Caco-2 (cell line): ENCODE measurements at regions of chr7 and their contacts with region 1.

Region 1: GRCh38 chr7:123242467-123243092 is 42.8 kb upstream of the SLC13A1 start:
- DNase-seq: peak; percentile 35 to 42
- H3K4me3 ChIP-seq: no peak overlapping the region
- H3K4me3 Mint-ChIP-seq: no peak overlapping the region
- H3K27ac Mint-ChIP-seq: no peak overlapping the region
- H3K4me1 ChIP-seq: no peaks in the 10 kb centered on the region
- H3K4me1 Mint-ChIP-seq: no peaks in the 10 kb centered on the region
- H3K27me3 ChIP-seq: no peaks in the 10 kb centered on the region
- H3K27me3 Mint-ChIP-seq: no peaks in the 10 kb centered on the region
- CTCF ChIP-seq: no peak

Region 2: DNA sequence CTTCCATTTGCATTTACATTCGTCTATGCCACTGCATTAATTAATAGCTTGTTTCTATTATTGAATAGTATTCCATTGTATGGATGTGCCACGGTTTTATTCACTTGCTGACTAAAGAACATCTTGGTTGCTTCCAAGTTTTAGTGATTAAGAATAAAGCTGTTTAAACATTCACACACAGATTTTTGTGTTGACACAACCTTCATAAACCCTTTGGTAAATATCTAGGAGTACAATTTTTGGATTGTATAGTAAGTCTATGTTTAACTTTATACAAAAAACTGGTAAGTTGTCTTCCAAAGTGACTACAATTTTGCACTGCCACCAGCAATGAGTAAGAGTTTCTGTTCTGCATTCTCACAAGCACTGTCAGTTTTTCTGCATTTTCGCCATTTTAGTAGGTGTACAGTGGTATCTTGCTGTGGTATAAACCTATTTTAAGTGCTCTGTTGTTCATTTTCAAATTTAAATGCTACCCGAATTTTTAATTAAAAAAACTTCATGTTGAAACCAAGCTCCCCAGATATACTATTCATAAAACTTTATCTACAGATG is 665.1 kb before region 1 on chr7:
- CTCF ChIA-PET with region 1: no interaction called
- POLR2A ChIA-PET with region 1: no interaction called
- intact Hi-C with region 1: no loop called
- DNase-seq: no peak
- H3K4me3 ChIP-seq: no peak overlapping the region
- H3K4me3 Mint-ChIP-seq: no peak overlapping the region
- H3K27ac Mint-ChIP-seq: no peak overlapping the region
- H3K4me1 ChIP-seq: no peaks in the 10 kb centered on the region
- H3K4me1 Mint-ChIP-seq: no peaks in the 10 kb centered on the region
- H3K27me3 ChIP-seq: no peaks in the 10 kb centered on the region
- H3K27me3 Mint-ChIP-seq: no peaks in the 10 kb centered on the region
- CTCF ChIP-seq: no peak

Region 3: GRCh38 chr7:123282186-123282585 is 39.6 kb after region 1 on chr7:
- CTCF ChIA-PET with region 1: no interaction called
- POLR2A ChIA-PET with region 1: no interaction called
- intact Hi-C with region 1: loop called (anchors 1 kb)
- DNase-seq: peak in 1 of 2 experiments; percentile 10
- H3K4me3 ChIP-seq: no peak overlapping the region
- H3K4me3 Mint-ChIP-seq: no peak overlapping the region
- H3K27ac Mint-ChIP-seq: no peak overlapping the region
- H3K4me1 ChIP-seq: no peaks in the 10 kb centered on the region; the same call in 1 of the 2 replicates
- H3K4me1 Mint-ChIP-seq: no peaks in the 10 kb centered on the region
- H3K27me3 ChIP-seq: no peaks in the 10 kb centered on the region
- H3K27me3 Mint-ChIP-seq: no peaks in the 10 kb centered on the region
- CTCF ChIP-seq: no peak